PC-9 (cell line): ENCODE measurements at regions of chr10 and their contacts with region 1.

Region 1: DNA sequence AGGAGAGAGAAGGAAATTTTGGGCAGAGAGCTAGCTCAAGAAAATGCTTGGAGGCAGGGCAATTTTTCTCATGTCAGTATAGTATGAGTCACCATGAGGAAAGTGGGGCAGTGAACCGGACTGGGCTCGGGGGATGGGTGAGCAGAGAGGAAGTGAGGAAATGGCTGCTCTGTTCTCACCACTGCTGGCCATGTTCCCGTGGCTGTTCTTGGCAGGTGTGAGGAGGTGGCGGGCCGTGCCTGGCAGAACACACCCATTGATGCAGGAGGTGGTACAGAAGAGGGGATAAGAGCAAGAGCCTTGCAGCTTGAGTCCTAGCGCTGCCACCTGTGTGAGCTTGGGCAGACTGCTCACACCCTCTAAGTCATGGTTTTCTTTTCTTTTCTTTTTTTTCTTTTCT is 304.4 kb upstream of the LYZL1 start:
- DNase-seq: peak; percentile 75 to 77
- H3K4me3 ChIP-seq: no peak overlapping the region
- H3K27ac ChIP-seq: no peak overlapping the region
- H3K4me1 ChIP-seq: peaks cover 14% of the 10 kb centered on the region
- H3K27me3 ChIP-seq: no peaks in the 10 kb centered on the region
- CTCF ChIP-seq: no peak

Region 2: DNA sequence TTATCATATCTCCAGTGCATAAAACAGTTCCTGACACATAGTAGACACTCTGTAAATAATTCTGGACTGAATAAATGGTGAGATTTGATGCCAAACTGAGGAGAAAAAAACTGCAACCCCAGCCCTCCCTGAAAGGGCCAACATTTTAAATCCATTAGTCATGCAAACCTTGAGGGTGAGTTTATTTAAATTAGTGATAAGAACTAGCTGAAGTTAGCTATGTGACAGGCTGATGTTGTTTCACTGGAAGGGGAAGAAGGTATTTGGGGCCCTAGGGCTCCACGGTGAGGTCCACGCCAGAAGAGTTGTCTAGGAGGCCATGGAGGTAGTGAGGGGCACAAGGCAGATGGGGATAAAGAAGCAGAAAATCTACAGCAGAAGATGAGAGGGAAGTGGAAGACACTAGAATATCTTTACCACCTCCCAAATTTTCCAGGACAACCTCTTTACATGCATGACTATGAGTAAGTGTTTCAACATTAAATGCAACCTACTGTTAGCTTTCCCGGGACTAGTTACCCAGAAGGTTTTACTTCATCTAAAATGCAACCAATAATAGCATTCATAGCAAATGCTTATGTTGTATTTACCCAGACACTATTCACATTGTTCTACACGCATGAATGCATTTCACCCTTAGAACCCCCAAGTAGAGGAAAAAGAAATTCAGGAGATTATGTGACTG is 121.2 kb after region 1 on chr10:
- CTCF ChIA-PET with region 1: no interaction called
- POLR2A ChIA-PET with region 1: no interaction called
- intact Hi-C with region 1: loop called (anchors 10 kb)
- DNase-seq: peak; percentile 51 to 81
- H3K4me3 ChIP-seq: no peak overlapping the region; the same call in 1 of the 2 replicates
- H3K27ac ChIP-seq: peak overlapping the region; percentile 79
- H3K4me1 ChIP-seq: peaks cover 59% of the 10 kb centered on the region
- H3K27me3 ChIP-seq: no peaks in the 10 kb centered on the region
- CTCF ChIP-seq: no peak